Calu3 (cell line): ENCODE measurements at regions of chr9 and their contacts with region 1.

Region 1: GRCh38 chr9:80932181-80932580 is 757.2 kb downstream of the TLE1 start:
- DNase-seq: no peak
- H3K4me3 Mint-ChIP-seq: no peak overlapping the region
- H3K27ac Mint-ChIP-seq: no peak overlapping the region
- H3K4me1 Mint-ChIP-seq: no peaks in the 10 kb centered on the region
- H3K27me3 Mint-ChIP-seq: no peaks in the 10 kb centered on the region
- CTCF ChIP-seq: no peak

Region 2: GRCh38 chr9:81490605-81491331 is 558.6 kb after region 1 on chr9:
- CTCF ChIA-PET with region 1: no interaction called
- intact Hi-C with region 1: no loop called
- DNase-seq: no peak
- H3K4me3 Mint-ChIP-seq: no peak overlapping the region
- H3K27ac Mint-ChIP-seq: peak overlapping the region; percentile 97
- H3K4me1 Mint-ChIP-seq: peaks cover 23% of the 10 kb centered on the region
- H3K27me3 Mint-ChIP-seq: no peaks in the 10 kb centered on the region
- CTCF ChIP-seq: no peak

Region 3: GRCh38 chr9:81537964-81538363 is 605.8 kb after region 1 on chr9:
- CTCF ChIA-PET with region 1: interaction called, 10 read pairs
- intact Hi-C with region 1: no loop called
- DNase-seq: no peak
- H3K4me3 Mint-ChIP-seq: no peak overlapping the region
- H3K27ac Mint-ChIP-seq: no peak overlapping the region
- H3K4me1 Mint-ChIP-seq: no peaks in the 10 kb centered on the region
- H3K27me3 Mint-ChIP-seq: no peaks in the 10 kb centered on the region
- CTCF ChIP-seq: no peak

Region 4: DNA sequence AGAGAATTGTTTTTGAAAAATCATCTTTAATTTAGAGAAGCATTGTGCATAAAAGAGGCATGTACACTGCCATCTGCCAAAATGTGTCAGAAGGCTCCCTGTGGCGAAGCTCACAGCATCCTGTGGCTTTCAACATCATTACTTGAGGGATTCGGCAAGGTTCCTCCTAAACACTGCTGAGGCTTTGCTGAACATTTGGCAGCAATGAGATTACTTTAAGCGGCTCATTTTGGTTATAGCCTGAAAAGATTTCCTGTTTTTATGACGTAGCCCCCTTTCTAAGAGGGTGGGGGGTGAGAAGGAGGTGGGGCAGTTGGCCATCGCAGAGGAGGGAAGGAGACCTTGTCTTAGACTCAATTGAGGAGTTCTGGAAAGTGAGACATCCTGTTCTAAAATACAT is 1661.3 kb after region 1 on chr9:
- CTCF ChIA-PET with region 1: no interaction called
- intact Hi-C with region 1: no loop called
- DNase-seq: no peak
- H3K4me3 Mint-ChIP-seq: no peak overlapping the region
- H3K27ac Mint-ChIP-seq: no peak overlapping the region
- H3K4me1 Mint-ChIP-seq: no peaks in the 10 kb centered on the region
- H3K27me3 Mint-ChIP-seq: no peaks in the 10 kb centered on the region
- CTCF ChIP-seq: no peak